Activated B cell treated with CpG ODN at 0.5 μM for 24 hours (primary cell): ENCODE measurements at regions of chr10 and their contacts with region 1.

Region 1: GRCh38 chr10:16891375-16892313 is 74.4 kb upstream of the RSU1 start:
- DNase-seq: no peak
- ATAC-seq: peak; percentile 84
- H3K4me3 Mint-ChIP-seq: peak overlapping the region; percentile 77
- H3K27ac Mint-ChIP-seq: peak overlapping the region; percentile 10
- H3K4me1 Mint-ChIP-seq: peaks cover 10% of the 10 kb centered on the region
- H3K27me3 Mint-ChIP-seq: peaks cover 3% of the 10 kb centered on the region
- CTCF ChIP-seq: no peak

Region 2: GRCh38 chr10:16673443-16673842 is 218.2 kb before region 1 on chr10:
- CTCF ChIA-PET with region 1: no interaction called
- POLR2A ChIA-PET with region 1: no interaction called
- intact Hi-C with region 1: no loop called
- DNase-seq: no peak
- ATAC-seq: no peak
- H3K4me3 Mint-ChIP-seq: no peak overlapping the region
- H3K27ac Mint-ChIP-seq: no peak overlapping the region
- H3K4me1 Mint-ChIP-seq: no peaks in the 10 kb centered on the region
- H3K27me3 Mint-ChIP-seq: no peaks in the 10 kb centered on the region
- CTCF ChIP-seq: no peak

Region 3: GRCh38 chr10:16843252-16843870 is 48.3 kb before region 1 on chr10:
- CTCF ChIA-PET with region 1: no interaction called
- POLR2A ChIA-PET with region 1: no interaction called
- intact Hi-C with region 1: loop called (anchors 2 kb)
- DNase-seq: no peak
- ATAC-seq: peak; percentile 37
- H3K4me3 Mint-ChIP-seq: no peak overlapping the region
- H3K27ac Mint-ChIP-seq: no peak overlapping the region
- H3K4me1 Mint-ChIP-seq: no peaks in the 10 kb centered on the region
- H3K27me3 Mint-ChIP-seq: no peaks in the 10 kb centered on the region
- CTCF ChIP-seq: peak; percentile 35

Region 4: DNA sequence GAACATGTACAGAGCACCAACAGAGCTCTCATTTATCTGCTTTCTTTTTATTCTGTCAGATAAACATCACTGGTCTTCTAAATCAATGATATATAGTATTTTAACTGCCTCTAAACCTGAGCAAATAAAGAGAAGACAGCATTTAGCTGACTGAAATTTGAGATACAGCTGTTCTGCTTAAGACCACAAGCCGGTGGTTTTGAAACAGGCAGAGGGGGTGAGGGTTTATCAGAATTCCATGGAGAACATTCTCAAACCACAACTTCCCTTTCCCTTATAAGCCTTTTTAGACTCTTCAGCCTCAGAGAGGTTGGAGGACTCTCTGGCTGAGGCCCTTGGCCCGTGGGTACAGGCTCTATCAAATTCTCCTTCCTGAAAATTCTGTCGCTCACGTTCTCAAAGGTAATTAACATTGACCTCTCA is 13.0 kb after region 1 on chr10:
- CTCF ChIA-PET with region 1: no interaction called
- POLR2A ChIA-PET with region 1: no interaction called
- intact Hi-C with region 1: no loop called
- DNase-seq: no peak
- ATAC-seq: no peak
- H3K4me3 Mint-ChIP-seq: no peak overlapping the region
- H3K27ac Mint-ChIP-seq: no peak overlapping the region
- H3K4me1 Mint-ChIP-seq: peaks cover 2% of the 10 kb centered on the region
- H3K27me3 Mint-ChIP-seq: no peaks in the 10 kb centered on the region
- CTCF ChIP-seq: no peak

Region 5: GRCh38 chr10:17029581-17030271 is 138.1 kb after region 1 on chr10:
- CTCF ChIA-PET with region 1: no interaction called
- POLR2A ChIA-PET with region 1: no interaction called
- intact Hi-C with region 1: loop called (anchors 5 kb)
- DNase-seq: no peak
- ATAC-seq: peak; percentile 64
- H3K4me3 Mint-ChIP-seq: peak overlapping the region; percentile 64
- H3K27ac Mint-ChIP-seq: peak overlapping the region; percentile 46
- H3K4me1 Mint-ChIP-seq: peaks cover 38% of the 10 kb centered on the region
- H3K27me3 Mint-ChIP-seq: no peaks in the 10 kb centered on the region
- CTCF ChIP-seq: no peak

Region 6: GRCh38 chr10:17249820-17250219 is 358.2 kb after region 1 on chr10:
- CTCF ChIA-PET with region 1: no interaction called
- POLR2A ChIA-PET with region 1: no interaction called
- intact Hi-C with region 1: loop called (anchors 1 kb)
- DNase-seq: no peak
- ATAC-seq: peak; percentile 56
- H3K4me3 Mint-ChIP-seq: no peak overlapping the region
- H3K27ac Mint-ChIP-seq: no peak overlapping the region
- H3K4me1 Mint-ChIP-seq: no peaks in the 10 kb centered on the region
- H3K27me3 Mint-ChIP-seq: peaks cover 5% of the 10 kb centered on the region
- CTCF ChIP-seq: no peak

Region 7: GRCh38 chr10:17257466-17258321 is 366.1 kb after region 1 on chr10:
- CTCF ChIA-PET with region 1: interaction called, 11 read pairs
- POLR2A ChIA-PET with region 1: no interaction called
- intact Hi-C with region 1: loop called (anchors 1 kb)
- DNase-seq: no peak
- ATAC-seq: peak; percentile 74
- H3K4me3 Mint-ChIP-seq: no peak overlapping the region
- H3K27ac Mint-ChIP-seq: no peak overlapping the region
- H3K4me1 Mint-ChIP-seq: peaks cover 6% of the 10 kb centered on the region
- H3K27me3 Mint-ChIP-seq: peaks cover 5% of the 10 kb centered on the region
- CTCF ChIP-seq: peak; percentile 88

Region 8: GRCh38 chr10:17430647-17431355 is 539.2 kb after region 1 on chr10:
- CTCF ChIA-PET with region 1: no interaction called
- POLR2A ChIA-PET with region 1: no interaction called
- intact Hi-C with region 1: loop called (anchors 1 kb)
- DNase-seq: no peak
- ATAC-seq: peak; percentile 49
- H3K4me3 Mint-ChIP-seq: no peak overlapping the region
- H3K27ac Mint-ChIP-seq: no peak overlapping the region
- H3K4me1 Mint-ChIP-seq: peaks cover 49% of the 10 kb centered on the region
- H3K27me3 Mint-ChIP-seq: peaks cover 23% of the 10 kb centered on the region
- CTCF ChIP-seq: peak; percentile 72